ENCODE measurements at regions of chr5 and their contacts with region 1.

Region 1: GRCh38 chr5:109483395-109483971 is 73.7 kb upstream of the PJA2 start:
- DNase-seq: no peak
- ATAC-seq: peak in 2 of 4 donors; percentile 51 to 62
- H3K4me3 ChIP-seq: no peak overlapping the region
- H3K27ac ChIP-seq: no peak overlapping the region
- H3K4me1 ChIP-seq: peaks cover 0 to 18% (median 12%) of the 10 kb centered on the region in 3 donors
- H3K27me3 ChIP-seq: no peaks in the 10 kb centered on the region
- CTCF ChIP-seq: no peak

Region 2: DNA sequence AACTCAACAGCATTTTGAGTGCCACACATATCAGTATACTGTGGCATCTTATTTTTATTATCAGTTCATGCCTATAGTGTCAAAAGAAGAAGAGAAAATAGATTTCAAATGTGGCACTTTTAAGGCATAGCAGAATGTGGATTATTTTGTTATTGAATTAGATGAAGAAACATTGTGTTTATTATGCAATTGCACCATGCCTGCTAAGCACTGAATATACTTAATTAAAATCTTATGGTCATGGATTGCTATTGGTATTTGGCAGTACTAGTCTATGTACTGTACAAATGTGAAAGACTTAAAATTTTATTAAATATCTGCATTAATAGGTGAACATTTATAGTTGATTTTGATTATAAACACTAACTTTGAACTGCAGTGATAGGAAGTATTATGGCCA is 607.0 kb before region 1 on chr5:
- intact Hi-C with region 1: loop called in 1 of 3 experiments (anchors 5 kb)
- DNase-seq: no peak
- ATAC-seq: no peak
- H3K4me3 ChIP-seq: no peak overlapping the region
- H3K27ac ChIP-seq: no peak overlapping the region
- H3K4me1 ChIP-seq: no peaks in the 10 kb centered on the region
- H3K27me3 ChIP-seq: no peaks in the 10 kb centered on the region
- CTCF ChIP-seq: no peak

Region 3: DNA sequence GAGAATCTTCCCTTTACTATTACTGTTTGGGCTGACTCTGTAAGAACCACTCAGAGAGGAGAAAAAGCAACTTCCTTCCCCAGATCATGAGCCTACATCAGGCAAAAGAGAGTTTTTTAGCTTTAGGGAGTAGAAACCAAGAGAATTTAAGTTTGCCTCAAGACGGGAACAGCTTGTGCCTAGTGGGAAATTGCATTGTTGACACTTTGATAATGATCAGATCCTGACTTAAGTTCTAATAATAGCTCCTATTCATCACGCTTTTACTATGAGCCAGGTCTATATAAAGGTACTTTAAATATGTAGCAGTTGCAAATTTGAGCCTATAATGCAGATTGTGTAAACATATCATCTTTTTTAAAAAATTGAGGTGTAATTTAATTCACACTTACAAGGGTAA is 504.5 kb after region 1 on chr5:
- intact Hi-C with region 1: no loop called
- DNase-seq: no peak
- ATAC-seq: peak in 1 of 4 donors; percentile 61
- H3K4me3 ChIP-seq: no peak overlapping the region
- H3K27ac ChIP-seq: no peak overlapping the region
- H3K4me1 ChIP-seq: no peaks in the 10 kb centered on the region
- H3K27me3 ChIP-seq: no peaks in the 10 kb centered on the region
- CTCF ChIP-seq: no peak